ENCODE measurements at regions of chr7 and their contacts with region 1.

Region 1: DNA sequence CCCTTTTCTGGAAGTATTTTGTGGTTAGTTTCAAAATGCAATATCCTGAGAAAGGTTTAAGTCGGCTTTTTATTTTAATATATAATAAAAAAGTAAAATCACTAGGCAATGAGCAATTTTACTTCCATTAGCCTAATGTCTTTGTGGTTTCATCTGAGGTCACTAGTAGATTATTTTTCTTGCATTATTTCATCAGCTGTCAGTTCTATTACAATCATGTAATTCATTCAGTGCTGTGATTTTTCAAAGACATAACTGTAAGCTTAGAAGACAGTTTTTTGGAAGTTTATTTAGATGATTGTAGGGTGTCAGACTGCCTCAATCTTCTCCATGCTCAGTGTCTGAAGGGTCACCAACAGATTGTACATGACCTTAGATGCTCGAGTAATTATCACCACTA is 568.0 kb upstream of the GALNT17 start:
- DNase-seq: no peak
- ATAC-seq: no peak
- H3K4me3 ChIP-seq: no peak overlapping the region
- H3K27ac ChIP-seq: no peak overlapping the region
- H3K4me1 ChIP-seq: no peaks in the 10 kb centered on the region
- H3K27me3 ChIP-seq: no peaks in the 10 kb centered on the region
- CTCF ChIP-seq: no peak

Region 2: GRCh38 chr7:70583965-70584883 is 20.3 kb after region 1 on chr7:
- CTCF ChIA-PET with region 1: no interaction called
- POLR2A ChIA-PET with region 1: no interaction called
- in situ Hi-C with region 1: no loop called
- intact Hi-C with region 1: loop called (anchors 2 kb)
- DNase-seq: no peak
- ATAC-seq: no peak
- H3K4me3 ChIP-seq: no peak overlapping the region
- H3K27ac ChIP-seq: no peak overlapping the region
- H3K4me1 ChIP-seq: no peaks in the 10 kb centered on the region
- H3K27me3 ChIP-seq: no peaks in the 10 kb centered on the region
- CTCF ChIP-seq: no peak